ENCODE measurements at regions of chr11 and their contacts with region 1.

Region 1: DNA sequence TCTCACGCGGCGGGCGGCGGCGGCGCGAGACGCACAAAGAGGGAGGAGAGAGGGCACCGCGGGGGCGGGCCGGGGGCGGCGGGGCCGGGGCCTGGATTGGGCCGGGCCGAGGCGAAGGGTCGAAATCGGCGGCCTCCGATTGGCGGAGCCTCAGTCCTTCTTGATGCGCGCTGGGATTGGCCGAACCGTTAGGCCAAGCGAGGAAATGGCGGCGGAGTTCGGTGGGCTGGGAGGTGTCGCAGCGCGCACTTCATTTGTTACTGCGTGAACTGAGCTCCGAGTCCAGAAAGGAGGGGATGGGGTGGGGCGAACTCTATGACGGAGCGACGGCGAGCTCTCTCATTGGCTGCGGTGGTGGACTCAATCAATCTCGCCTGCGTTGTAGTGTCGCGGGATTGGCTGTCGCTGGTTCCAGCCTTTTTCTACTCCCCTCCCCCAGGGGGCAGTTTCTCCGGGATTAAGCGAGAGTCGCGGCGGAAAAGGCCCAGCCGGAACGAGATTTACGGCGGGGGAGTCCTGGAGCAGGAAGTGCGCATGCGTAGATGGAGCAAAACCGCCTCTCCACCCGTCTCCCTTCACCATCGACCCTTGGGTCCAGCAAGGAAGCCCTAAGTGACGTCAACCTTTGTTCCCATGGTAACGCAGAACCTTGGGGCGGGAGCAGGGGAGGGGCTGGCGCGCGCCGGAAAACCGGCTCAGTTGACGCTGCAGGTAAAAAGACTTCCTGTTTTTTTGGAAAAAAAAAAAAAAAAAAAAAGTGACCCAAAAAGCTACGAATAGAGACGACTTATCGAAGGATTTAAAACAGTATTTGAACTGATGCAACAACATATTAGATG is at the start of gene SF1:
- DNase-seq: peak; percentile 97 to 100
- ATAC-seq: peak; percentile 79 to 92 (median 81)
- H3K4me3 ChIP-seq: peak within 1 kb of the TSS; percentile 64
- H3K4me3 Mint-ChIP-seq: peak within 1 kb of the TSS; percentile 95
- H3K27ac ChIP-seq: peak within 1 kb of the TSS; percentile 98
- H3K27ac Mint-ChIP-seq: peak within 1 kb of the TSS; percentile 97 to 100
- H3K4me1 ChIP-seq: peaks cover 28% of the 10 kb centered on the region
- H3K4me1 Mint-ChIP-seq: peaks cover 43 to 46% of the 10 kb centered on the region in 2 donors
- H3K27me3 ChIP-seq: no peaks in the 10 kb centered on the region
- H3K27me3 Mint-ChIP-seq: no peaks in the 10 kb centered on the region
- CTCF ChIP-seq: no peak
- total RNA-seq, gene SF1: 841 to 864 (median 845) TPM

Region 2: DNA sequence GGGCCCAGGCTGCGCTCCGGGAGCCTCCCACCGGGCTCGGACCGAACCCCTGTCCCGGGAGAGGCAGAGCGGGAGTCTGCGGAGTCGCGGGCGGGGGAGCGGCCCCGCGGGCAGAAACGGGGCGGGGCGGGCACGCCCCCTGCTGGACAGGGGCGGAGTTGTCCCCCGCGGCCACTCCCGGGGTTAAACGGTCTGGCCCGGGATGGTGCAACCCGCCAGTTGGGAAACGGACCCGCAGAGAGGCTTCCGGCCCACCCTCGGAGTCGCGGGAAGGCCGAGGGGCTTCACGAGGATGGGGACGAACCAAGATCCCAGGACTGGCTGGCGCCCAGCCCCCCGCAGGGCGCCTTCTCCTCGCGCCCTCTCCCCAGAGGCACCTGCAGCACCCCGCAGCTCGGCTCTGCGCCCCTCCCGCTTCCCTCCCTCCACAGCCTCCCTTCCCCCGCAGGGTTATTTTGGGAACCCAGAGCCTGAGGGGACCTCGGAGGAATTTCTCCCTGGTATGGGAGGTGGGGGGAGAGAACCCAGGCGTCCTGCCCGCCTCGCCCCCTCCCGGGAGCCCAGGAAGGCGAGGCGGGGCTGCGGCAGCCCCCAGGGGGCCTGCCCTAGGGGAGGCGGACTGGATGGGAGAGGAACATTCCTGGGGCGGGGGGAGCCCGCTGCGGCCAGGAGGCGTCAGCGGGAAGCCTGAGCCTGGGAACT is 35.7 kb before region 1 on chr11:
- intact Hi-C with region 1: loop called (anchors 1 kb)
- DNase-seq: peak; percentile 81 to 86
- ATAC-seq: peak; percentile 22 to 48 (median 23)
- H3K4me3 ChIP-seq: peak overlapping the region; percentile 61
- H3K4me3 Mint-ChIP-seq: peak overlapping the region; percentile 99
- H3K27ac ChIP-seq: peak overlapping the region; percentile 82
- H3K27ac Mint-ChIP-seq: peak overlapping the region; percentile 98
- H3K4me1 ChIP-seq: peaks cover 48% of the 10 kb centered on the region
- H3K4me1 Mint-ChIP-seq: peaks cover 33 to 69% of the 10 kb centered on the region in 2 donors
- H3K27me3 ChIP-seq: no peaks in the 10 kb centered on the region
- H3K27me3 Mint-ChIP-seq: no peaks in the 10 kb centered on the region
- CTCF ChIP-seq: peak; percentile 72

Region 3: DNA sequence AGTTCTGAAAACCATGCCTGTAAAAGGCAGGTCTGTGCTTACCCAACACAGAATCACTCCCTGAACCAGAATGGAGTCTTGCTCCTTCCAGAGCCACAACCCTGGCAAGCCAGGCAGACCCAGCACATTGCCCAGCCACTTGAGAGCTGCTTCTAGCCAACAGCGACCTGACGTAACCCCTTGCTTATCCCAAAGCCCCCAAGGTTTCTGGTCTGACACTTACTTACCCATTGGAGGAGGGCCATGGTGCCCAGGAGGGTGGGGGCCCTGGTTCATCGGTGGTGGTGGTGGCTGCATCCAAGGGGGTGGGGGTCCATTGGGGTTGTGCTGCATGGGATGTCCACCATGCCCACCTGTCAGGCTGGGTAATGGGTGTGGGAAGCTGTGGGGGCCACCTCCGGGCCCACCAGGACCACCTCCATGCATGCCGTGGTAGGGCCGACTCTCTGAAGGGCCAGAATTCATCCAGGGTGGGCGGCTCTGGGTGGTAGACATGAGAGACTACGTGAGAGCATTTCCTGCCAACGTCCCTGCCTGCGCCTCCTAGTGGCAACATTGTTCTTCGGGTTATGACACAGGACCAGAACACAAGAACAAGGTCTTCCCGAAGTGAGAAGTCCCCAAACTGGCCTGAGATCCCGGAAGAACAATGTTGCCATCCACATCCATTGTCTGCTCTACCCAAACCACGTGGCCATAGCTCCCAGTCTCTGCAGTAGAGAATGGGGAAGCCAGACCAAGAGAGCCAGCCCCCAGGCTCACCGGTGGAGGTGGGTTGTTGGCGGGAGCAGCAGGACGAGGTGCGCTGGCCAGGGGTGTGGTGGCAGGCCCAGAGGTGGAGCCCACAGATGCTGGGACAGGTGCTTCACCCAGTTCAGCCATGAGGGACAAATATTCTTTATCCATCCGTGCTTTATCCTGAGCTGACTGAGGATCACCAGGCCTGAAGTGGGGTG is 11.1 kb before region 1 on chr11:
- intact Hi-C with region 1: loop called (anchors 2 kb)
- DNase-seq: peak; percentile 76 to 91
- ATAC-seq: peak; percentile 39 to 58 (median 42)
- H3K4me3 ChIP-seq: no peak overlapping the region
- H3K4me3 Mint-ChIP-seq: peak overlapping the region; percentile 52
- H3K27ac ChIP-seq: peak overlapping the region; percentile 51
- H3K27ac Mint-ChIP-seq: peak overlapping the region; percentile 83 to 95
- H3K4me1 ChIP-seq: peaks cover 60% of the 10 kb centered on the region
- H3K4me1 Mint-ChIP-seq: peaks cover 80 to 85% of the 10 kb centered on the region in 2 donors
- H3K27me3 ChIP-seq: no peaks in the 10 kb centered on the region
- H3K27me3 Mint-ChIP-seq: no peaks in the 10 kb centered on the region
- CTCF ChIP-seq: peak; percentile 91

Region 4: DNA sequence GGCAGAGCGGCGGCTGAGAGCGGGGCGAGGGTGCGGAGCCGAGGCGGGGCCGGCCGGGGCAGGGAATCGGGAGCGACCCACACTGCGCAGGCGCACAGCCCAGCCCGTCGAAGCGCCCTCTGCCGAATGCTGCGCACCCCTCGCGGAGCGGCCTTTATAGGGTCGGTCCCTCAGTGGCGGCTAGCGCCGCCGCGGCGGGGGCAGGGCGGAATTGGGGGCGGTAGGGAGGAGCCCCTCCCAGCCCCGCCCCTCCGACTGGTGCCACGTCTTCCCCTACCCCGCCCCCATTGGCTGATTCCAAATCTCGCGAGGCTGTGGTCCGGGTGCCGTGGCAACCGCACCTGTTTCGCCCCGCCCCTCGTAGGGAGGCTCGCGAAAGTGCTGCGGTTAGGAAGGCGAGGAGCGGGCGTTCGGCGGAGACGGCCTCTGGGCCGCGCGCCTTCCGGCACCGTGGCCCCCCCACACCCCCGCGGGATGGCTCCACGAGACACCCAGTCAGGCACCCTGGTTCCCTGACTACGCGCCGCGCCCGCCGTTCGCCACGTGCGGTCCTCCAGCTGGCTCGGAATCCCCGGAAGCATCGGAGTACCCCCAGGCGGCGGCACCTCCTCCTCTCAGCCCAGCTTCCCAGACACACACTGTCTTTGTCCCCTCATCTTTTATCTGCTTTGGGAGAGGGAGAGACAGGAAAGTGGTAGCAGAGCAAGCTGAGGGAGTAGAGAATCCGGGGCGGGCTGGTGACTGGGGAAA is 99.9 kb after region 1 on chr11 and contains the start of gene EHD1:
- intact Hi-C with region 1: loop called (anchors 1 kb)
- DNase-seq: peak; percentile 99 to 100
- ATAC-seq: peak; percentile 82 to 94 (median 83)
- H3K4me3 ChIP-seq: peak within 1 kb of the TSS; percentile 73
- H3K4me3 Mint-ChIP-seq: peak within 1 kb of the TSS; percentile 98
- H3K27ac ChIP-seq: peak within 1 kb of the TSS; percentile 96
- H3K27ac Mint-ChIP-seq: peak within 1 kb of the TSS; percentile 95
- H3K4me1 ChIP-seq: peaks cover 67% of the 10 kb centered on the region
- H3K4me1 Mint-ChIP-seq: peaks cover 52 to 69% of the 10 kb centered on the region in 2 donors
- H3K27me3 ChIP-seq: no peaks in the 10 kb centered on the region
- H3K27me3 Mint-ChIP-seq: no peaks in the 10 kb centered on the region
- CTCF ChIP-seq: peak; percentile 28
- total RNA-seq, gene EHD1: 218 to 246 (median 225) TPM